ENCODE measurements at regions of chr11 and their contacts with region 1.

Region 1: DNA sequence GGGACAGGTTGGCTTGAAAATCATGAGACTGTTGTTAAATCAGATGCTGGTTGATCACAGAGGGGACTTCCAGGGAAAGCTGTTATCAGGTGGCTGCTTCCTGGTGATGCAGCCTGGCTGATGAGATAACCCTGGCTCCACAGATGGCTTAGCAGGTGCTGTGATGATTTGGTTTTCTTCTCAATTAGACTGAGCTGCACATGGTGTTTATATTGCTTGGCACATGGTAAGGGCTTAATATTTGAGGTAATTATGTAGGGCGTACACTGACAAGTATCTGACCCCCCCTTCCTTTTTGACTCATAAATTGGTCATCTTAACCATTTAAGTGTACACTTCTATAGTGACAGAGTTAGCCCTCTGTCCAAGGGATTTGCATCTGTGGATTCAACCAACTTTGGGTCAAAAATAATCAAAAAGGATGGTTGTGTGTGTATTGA is 7.0 kb downstream of the RPS3 start:
- DNase-seq: no peak
- H3K4me3 ChIP-seq: no peak overlapping the region
- H3K4me3 Mint-ChIP-seq: no peak overlapping the region
- H3K27ac Mint-ChIP-seq: no peak overlapping the region
- H3K4me1 ChIP-seq: peaks cover 24% of the 10 kb centered on the region
- H3K4me1 Mint-ChIP-seq: peaks cover 42% of the 10 kb centered on the region
- H3K27me3 ChIP-seq: no peaks in the 10 kb centered on the region
- H3K27me3 Mint-ChIP-seq: no peaks in the 10 kb centered on the region
- CTCF ChIP-seq: no peak

Region 2: GRCh38 chr11:75422253-75423231 is 16.2 kb after region 1 on chr11:
- CTCF ChIA-PET with region 1: interaction called, 16 read pairs
- POLR2A ChIA-PET with region 1: interaction called, 12 read pairs
- intact Hi-C with region 1: loop called (anchors 1 kb)
- DNase-seq: peak; percentile 97 to 98
- H3K4me3 ChIP-seq: no peak overlapping the region
- H3K4me3 Mint-ChIP-seq: peak overlapping the region; percentile 66
- H3K27ac Mint-ChIP-seq: peak overlapping the region; percentile 92
- H3K4me1 ChIP-seq: peaks cover 56% of the 10 kb centered on the region
- H3K4me1 Mint-ChIP-seq: peaks cover 54% of the 10 kb centered on the region
- H3K27me3 ChIP-seq: no peaks in the 10 kb centered on the region
- H3K27me3 Mint-ChIP-seq: no peaks in the 10 kb centered on the region
- CTCF ChIP-seq: no peak

Region 3: GRCh38 chr11:75429902-75430719 is 23.8 kb after region 1 on chr11:
- CTCF ChIA-PET with region 1: interaction called, 10 read pairs
- POLR2A ChIA-PET with region 1: interaction called, 6 read pairs
- intact Hi-C with region 1: loop called (anchors 1 kb)
- DNase-seq: peak; percentile 95 to 98
- H3K4me3 ChIP-seq: peak overlapping the region; percentile 71
- H3K4me3 Mint-ChIP-seq: peak overlapping the region; percentile 84
- H3K27ac Mint-ChIP-seq: peak overlapping the region; percentile 90
- H3K4me1 ChIP-seq: peaks cover 14% of the 10 kb centered on the region
- H3K4me1 Mint-ChIP-seq: peaks cover 9% of the 10 kb centered on the region
- H3K27me3 ChIP-seq: no peaks in the 10 kb centered on the region
- H3K27me3 Mint-ChIP-seq: no peaks in the 10 kb centered on the region
- CTCF ChIP-seq: peak in 1 of 2 experiments; percentile 20

Region 4: DNA sequence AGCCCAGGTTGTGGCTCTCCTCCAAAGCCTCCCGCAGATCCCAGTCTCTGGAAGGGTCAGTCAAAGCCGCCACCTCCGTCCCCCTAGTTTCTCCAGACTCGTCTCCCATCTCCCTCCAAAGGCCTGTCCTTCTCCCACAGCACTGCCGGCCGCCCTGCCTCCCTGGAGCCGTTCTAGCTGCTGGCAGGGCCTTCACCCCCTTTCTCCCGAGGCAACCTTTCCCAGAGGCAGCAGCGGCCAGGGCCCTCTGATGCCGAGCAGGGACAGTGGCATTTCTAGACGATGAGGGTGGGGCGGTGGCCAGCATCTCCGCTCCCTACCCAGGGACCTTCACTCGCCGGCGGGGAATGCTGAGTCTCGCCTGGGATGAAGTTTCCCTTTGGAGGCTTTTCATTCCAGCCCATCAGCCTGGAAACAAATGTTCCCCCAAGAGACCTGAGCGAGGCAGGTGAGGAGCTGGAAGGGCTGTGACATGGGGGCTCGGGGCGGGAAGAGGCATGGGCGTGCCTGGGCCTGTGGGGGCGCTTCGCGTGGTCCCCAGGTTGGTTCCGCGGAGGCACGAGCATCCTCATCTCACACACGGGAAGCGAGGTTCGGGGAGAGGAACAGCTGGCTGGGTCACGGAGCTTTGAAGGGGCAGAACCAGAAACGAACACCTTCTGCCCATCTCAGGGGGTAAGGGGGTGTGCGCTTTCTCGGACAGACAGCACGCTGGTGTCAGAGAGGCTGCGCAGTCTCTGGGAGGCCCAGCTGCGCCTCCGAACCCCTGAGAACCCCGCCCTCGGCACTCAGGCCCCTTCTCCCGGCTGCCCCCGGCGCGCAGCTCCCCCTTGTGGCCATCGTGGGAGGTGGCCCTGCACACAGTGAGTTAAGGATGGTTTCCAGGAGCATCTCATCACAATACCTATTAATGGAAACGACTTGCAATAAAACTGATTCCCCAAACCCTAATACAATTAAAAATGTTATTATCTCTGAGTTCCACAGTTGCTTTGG is 44.8 kb after region 1 on chr11:
- CTCF ChIA-PET with region 1: interaction called, 8 read pairs
- POLR2A ChIA-PET with region 1: no interaction called
- intact Hi-C with region 1: loop called (anchors 1 kb)
- DNase-seq: peak in 1 of 2 experiments; percentile 79
- H3K4me3 ChIP-seq: no peak overlapping the region
- H3K4me3 Mint-ChIP-seq: no peak overlapping the region
- H3K27ac Mint-ChIP-seq: no peak overlapping the region
- H3K4me1 ChIP-seq: no peaks in the 10 kb centered on the region
- H3K4me1 Mint-ChIP-seq: no peaks in the 10 kb centered on the region
- H3K27me3 ChIP-seq: no peaks in the 10 kb centered on the region
- H3K27me3 Mint-ChIP-seq: no peaks in the 10 kb centered on the region
- CTCF ChIP-seq: peak; percentile 93 to 98

Measured in Caco-2 (cell line).